Gastrocnemius medialis (tissue), 4 donors: ENCODE measurements at regions of chr10 and their contacts with region 1.

Region 1: DNA sequence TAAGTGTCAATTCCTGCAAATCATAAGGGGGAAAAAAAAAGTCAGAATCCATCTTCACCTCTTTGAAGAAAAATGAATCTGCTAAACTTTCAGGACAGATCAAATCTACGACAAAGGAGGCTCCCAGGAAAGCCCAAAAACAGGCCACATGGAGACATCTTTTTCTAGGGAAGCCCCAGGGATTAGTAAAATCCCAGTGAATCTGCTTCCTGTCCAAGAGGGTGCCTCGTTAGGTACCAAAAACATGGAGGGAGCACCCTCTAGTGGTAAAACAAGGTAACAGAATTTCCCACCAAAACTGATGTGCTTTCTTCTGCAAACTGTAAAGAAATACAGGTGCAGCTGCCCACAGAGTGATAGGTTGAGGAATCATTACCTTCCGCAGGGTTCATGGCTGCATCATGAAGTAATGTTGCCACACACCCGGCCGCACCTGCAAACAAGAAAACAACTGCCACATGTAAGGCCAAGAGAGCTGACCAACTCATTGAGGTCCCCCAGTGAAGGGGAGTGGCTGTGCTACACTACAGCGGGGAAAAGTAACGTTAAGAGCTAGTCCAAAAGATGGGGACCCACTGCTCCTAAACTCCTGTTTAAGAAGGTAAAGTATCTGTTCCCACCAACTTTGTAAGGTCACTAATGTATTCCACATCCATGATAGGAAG is 7.9 kb downstream of the SLC25A28 start:
- DNase-seq: no peak
- ATAC-seq: peak; percentile 64 to 88
- H3K4me3 ChIP-seq: no peak overlapping the region
- H3K27ac ChIP-seq: no peak overlapping the region
- H3K4me1 ChIP-seq: peaks cover 11 to 20% of the 10 kb centered on the region in 2 donors
- H3K27me3 ChIP-seq: no peaks in the 10 kb centered on the region
- CTCF ChIP-seq: peak; percentile 65 to 84 (median 70)
- POLR2A ChIP-seq: no peak

Region 2: GRCh38 chr10:99395750-99396445 is 216.4 kb before region 1 on chr10:
- in situ Hi-C with region 1: loop called in 3 of 4 experiments (anchors 10 kb)
- intact Hi-C with region 1: loop called (anchors 2 kb)
- DNase-seq: no peak
- ATAC-seq: no peak
- H3K4me3 ChIP-seq: no peak overlapping the region
- H3K27ac ChIP-seq: peak overlapping the region; percentile 2 to 63 (median 48)
- H3K4me1 ChIP-seq: peaks cover 21 to 24% of the 10 kb centered on the region in 2 donors
- H3K27me3 ChIP-seq: no peaks in the 10 kb centered on the region
- CTCF ChIP-seq: no peak
- POLR2A ChIP-seq: no peak

Region 3: GRCh38 chr10:99435986-99436638 is 176.2 kb before region 1 on chr10:
- in situ Hi-C with region 1: loop called in 3 of 4 experiments (anchors 5 to 10 kb)
- intact Hi-C with region 1: loop called (anchors 2 kb)
- DNase-seq: no peak
- ATAC-seq: peak; percentile 45 to 48
- H3K4me3 ChIP-seq: no peak overlapping the region
- H3K27ac ChIP-seq: peak overlapping the region in 3 of 4 donors; percentile 26 to 97 (median 96)
- H3K4me1 ChIP-seq: peaks cover 54 to 58% of the 10 kb centered on the region in 2 donors
- H3K27me3 ChIP-seq: no peaks in the 10 kb centered on the region
- CTCF ChIP-seq: peak in 4 of 5 experiments; percentile 47 to 57 (median 50)
- POLR2A ChIP-seq: no peak

Region 4: DNA sequence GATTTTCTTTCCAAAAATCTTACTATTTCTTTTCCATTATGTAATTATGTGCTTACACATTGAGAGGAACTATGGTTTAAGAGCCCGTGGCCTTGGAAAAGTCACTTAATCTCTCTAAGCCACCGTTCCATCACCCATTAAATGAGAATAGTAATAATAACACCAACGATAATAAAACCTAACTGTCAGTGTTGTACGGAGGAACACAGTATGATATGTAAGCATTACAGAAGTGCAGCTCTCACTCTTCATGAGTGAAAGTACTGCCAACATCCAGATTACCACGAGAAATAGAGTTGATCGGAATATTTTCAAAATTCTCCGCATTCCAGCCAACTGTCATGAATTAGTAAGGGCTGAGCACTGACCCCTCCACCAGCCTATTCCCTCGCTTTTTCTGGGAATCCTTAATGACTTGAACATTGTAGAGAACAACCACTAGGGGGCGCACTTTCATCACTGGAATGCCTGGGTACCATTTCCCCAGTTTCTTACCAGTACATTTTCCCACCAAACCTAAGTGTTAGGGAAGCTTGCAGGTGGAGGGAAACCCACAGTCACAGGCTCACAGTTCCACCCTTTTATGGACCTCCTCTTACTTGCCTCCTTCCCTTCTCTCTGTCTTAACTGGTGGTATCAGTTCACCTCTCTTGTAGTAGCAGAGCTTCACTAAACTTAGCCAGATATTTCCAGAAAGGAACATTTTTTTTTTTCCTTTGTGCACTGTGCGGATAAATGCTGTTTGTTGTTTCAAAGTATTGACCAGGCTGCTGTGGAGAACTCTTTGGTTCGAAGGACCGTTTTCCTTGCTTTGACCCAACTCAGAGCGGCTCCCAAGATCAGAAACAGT is 51.8 kb before region 1 on chr10:
- in situ Hi-C with region 1: no loop called
- intact Hi-C with region 1: loop called (anchors 1 kb)
- DNase-seq: peak; percentile 21 to 35
- ATAC-seq: peak; percentile 73 to 92
- H3K4me3 ChIP-seq: no peak overlapping the region
- H3K27ac ChIP-seq: no peak overlapping the region
- H3K4me1 ChIP-seq: no peaks in the 10 kb centered on the region
- H3K27me3 ChIP-seq: peaks cover 0 to 7% (median 6%) of the 10 kb centered on the region in 3 donors
- CTCF ChIP-seq: peak; percentile 61 to 84 (median 75)
- POLR2A ChIP-seq: no peak

Region 5: DNA sequence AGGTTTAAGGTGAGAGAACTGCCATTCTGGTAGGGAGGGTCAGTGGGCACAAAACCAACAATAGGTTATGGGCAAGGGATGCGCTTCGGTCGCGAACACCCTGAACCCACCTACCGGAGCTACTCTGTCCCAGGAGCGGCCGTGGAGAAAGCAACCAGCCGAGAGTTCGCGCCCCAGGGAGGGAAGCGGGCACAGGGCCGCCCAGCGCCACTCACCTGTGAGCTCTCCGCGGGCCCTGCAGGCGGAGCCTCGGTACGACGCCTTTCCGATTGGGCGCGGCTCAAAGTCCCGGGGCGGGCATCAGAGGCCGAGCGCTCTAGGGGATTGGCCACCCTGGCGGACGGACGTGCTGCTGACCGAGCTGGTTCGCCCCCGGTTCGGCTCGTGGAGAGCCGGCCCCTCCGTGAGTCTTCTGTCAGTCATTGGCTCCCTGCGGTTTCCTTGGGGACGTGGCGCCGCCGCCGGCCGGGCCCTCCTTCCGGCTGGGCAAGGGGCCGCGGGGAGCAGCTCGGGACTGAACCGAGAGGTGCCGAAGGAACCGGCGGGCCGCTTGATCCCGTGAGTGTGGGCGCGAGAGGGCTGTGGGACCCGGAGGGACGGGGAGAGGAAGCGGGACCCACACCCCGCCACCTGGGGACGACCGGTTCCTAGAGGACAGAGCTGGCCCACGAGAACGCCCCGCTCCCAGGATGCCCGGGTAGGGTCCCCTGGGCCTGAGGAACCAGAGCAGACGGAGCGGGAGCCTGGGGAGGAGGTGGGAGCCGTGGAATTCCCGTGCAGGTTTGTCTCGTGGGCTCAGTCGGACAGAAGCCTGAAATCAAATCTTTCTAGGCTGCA is 47.0 kb after region 1 on chr10 and contains the start of gene ENTPD7:
- in situ Hi-C with region 1: no loop called
- intact Hi-C with region 1: loop called (anchors 2 kb)
- DNase-seq: peak; percentile 89 to 90
- ATAC-seq: peak; percentile 97 to 99
- H3K4me3 ChIP-seq: peak within 1 kb of the TSS; percentile 70 to 90 (median 84)
- H3K27ac ChIP-seq: peak within 1 kb of the TSS; percentile 6 to 62 (median 33)
- H3K4me1 ChIP-seq: peaks cover 11 to 13% of the 10 kb centered on the region in 2 donors
- H3K27me3 ChIP-seq: no peaks in the 10 kb centered on the region
- CTCF ChIP-seq: peak in 4 of 5 experiments; percentile 5 to 59 (median 46)
- POLR2A ChIP-seq: no peak
- total RNA-seq, gene ENTPD7: 0.32 to 1.1 (median 0.76) TPM

Region 6: DNA sequence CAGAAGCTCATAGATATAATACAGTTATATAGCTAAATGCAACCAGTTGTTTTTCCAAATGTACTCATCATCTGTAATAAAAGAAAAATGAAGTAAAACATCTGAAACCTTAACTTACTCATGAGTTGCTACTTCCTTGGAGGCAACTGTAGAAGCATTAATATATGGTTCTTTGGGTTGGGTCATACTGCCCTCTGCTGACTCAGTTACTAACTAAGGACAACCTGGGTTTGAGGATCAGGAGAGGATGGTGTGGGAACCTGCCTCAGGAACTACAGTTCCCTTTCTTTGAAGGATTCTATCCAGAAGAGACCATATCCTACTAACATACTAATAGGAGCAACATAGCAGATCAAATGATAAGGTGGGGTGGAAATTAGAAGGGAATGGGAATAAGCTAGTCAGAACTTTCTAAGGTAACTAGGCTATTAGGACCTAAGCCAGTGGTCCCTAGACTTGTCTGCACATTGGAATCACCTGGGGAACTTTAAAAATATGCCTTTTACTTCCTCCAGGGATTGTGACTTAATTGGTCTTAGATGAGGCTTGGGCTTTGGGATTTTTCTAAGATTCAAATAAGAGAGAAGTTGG is 98.9 kb after region 1 on chr10:
- in situ Hi-C with region 1: loop called in 1 of 4 experiments (anchors 10 kb)
- intact Hi-C with region 1: loop called (anchors 5 kb)
- DNase-seq: no peak
- ATAC-seq: peak; percentile 54 to 75
- H3K4me3 ChIP-seq: no peak overlapping the region
- H3K27ac ChIP-seq: no peak overlapping the region
- H3K4me1 ChIP-seq: no peaks in the 10 kb centered on the region
- H3K27me3 ChIP-seq: no peaks in the 10 kb centered on the region
- CTCF ChIP-seq: peak in 3 of 5 experiments; percentile 25 to 52 (median 34)
- POLR2A ChIP-seq: no peak